ENCODE measurements at regions of chr6 and their contacts with region 1.

Region 1: GRCh38 chr6:32984605-32985389 is 16.4 kb downstream of the BRD2 start:
- DNase-seq: peak; percentile 94
- H3K4me3 Mint-ChIP-seq: no peak overlapping the region
- H3K27ac Mint-ChIP-seq: peak overlapping the region; percentile 32
- H3K4me1 Mint-ChIP-seq: peaks cover 33% of the 10 kb centered on the region
- H3K27me3 Mint-ChIP-seq: no peaks in the 10 kb centered on the region

Region 2: DNA sequence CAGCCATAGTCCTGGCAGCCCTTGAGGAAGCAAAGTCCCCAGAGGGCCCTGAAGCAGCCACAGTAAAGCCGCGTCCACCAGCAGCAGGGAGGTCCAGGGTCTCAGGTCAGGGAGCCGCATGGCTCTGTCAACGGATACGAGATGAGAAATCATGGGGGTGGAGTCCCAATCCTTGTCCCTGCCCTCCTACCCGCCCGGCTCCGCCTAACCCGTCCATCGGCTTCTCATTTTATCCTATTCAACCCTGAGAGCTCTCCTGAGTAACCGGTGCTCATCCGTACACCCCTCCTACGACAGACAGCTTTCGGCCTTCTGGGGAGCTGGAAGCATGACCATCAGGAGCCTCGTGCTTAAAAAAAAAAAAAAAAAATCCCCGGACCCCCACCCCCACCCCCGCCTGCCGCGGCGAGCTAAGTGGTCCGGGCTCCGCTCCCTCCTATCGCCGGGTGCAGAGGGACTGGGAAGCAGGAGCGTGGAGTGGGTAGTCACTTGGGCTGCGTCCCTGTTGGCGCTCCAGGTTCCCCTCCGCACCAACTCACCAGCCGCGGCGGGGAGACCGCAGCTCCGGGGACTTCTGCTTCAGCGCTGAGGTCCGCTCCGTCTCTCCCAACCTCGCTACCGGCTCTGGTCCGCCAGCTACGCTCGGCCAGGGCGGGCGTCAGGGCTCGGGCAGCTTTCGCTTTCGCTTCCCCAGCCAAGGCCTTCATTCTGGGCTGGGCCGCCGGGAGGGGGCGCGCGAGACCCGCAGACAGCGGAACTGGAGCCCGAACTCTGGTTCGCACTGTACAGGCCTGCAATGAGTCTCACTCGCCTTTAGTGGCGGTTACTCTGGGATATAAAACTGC is 146.5 kb before region 1 on chr6 and contains the start of gene TAP2:
- CTCF ChIA-PET with region 1: interaction called, 18 read pairs
- POLR2A ChIA-PET with region 1: no interaction called
- DNase-seq: peak; percentile 97
- H3K4me3 Mint-ChIP-seq: peak within 1 kb of the TSS; percentile 89
- H3K27ac Mint-ChIP-seq: peak within 1 kb of the TSS; percentile 100
- H3K4me1 Mint-ChIP-seq: peaks cover 84% of the 10 kb centered on the region
- H3K27me3 Mint-ChIP-seq: no peaks in the 10 kb centered on the region
- total RNA-seq, gene TAP2: 332 to 337 TPM

Region 3: GRCh38 chr6:32853541-32854375 is 131.0 kb before region 1 on chr6 and contains the starts of genes PSMB9 and TAP1:
- CTCF ChIA-PET with region 1: interaction called, 14 read pairs
- POLR2A ChIA-PET with region 1: no interaction called
- DNase-seq: peak; percentile 97
- H3K4me3 Mint-ChIP-seq: peak within 1 kb of the TSS; percentile 98
- H3K27ac Mint-ChIP-seq: peak within 1 kb of the TSS; percentile 100
- H3K4me1 Mint-ChIP-seq: peaks cover 62% of the 10 kb centered on the region
- H3K27me3 Mint-ChIP-seq: no peaks in the 10 kb centered on the region
- total RNA-seq, gene PSMB9: 329 to 391 TPM
- total RNA-seq, gene TAP1: 396 to 441 TPM

Region 4: DNA sequence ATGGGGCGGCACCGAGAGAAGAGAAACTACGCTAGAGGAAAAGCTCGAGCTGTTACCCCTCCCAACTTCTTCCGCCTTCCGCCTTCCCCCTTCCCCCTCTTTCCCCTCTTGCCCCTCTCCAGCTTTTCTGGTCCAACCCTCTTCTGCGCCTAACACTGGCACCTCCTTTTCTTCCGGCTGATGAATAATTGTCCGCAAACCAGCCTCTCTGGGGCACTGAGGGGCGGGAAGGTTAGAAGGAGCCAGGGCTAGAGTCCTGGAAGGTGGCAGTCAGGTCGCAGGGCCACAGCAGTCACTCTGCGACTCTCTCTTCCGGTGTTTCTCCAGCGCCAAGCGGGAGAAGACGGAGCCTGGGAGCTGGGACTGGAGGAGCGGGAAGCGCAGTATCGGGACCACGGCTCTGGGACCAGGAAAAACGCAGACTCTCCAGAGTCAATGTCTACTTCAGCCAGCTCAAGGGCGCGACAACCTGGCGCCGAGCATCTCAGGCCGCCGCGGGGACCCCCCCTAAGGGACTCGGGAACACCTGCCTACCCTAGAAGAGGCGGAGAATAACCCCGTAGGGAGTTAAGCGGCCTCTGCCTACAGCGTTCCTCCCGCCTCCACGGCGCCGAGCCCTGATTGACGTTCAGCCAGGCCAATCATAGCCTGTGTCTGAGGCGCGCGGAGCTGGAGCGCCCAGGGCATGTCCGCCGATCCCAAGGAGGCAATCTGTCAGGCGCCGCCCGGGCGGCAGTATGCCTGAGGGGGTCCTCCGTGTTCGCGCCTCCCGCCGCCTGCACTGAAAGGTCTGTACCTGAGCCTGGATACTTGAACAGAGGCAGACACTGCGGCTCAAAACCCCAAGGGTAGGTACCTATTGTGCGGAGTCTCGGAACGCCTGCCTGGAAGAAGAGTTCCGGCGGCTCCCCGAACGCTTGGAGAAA is 90.5 kb before region 1 on chr6:
- CTCF ChIA-PET with region 1: interaction called, 11 read pairs
- POLR2A ChIA-PET with region 1: interaction called, 3 read pairs
- DNase-seq: peak; percentile 93
- H3K4me3 Mint-ChIP-seq: peak overlapping the region; percentile 100
- H3K27ac Mint-ChIP-seq: peak overlapping the region; percentile 96
- H3K4me1 Mint-ChIP-seq: peaks cover 38% of the 10 kb centered on the region
- H3K27me3 Mint-ChIP-seq: peaks cover 15% of the 10 kb centered on the region

Region 5: DNA sequence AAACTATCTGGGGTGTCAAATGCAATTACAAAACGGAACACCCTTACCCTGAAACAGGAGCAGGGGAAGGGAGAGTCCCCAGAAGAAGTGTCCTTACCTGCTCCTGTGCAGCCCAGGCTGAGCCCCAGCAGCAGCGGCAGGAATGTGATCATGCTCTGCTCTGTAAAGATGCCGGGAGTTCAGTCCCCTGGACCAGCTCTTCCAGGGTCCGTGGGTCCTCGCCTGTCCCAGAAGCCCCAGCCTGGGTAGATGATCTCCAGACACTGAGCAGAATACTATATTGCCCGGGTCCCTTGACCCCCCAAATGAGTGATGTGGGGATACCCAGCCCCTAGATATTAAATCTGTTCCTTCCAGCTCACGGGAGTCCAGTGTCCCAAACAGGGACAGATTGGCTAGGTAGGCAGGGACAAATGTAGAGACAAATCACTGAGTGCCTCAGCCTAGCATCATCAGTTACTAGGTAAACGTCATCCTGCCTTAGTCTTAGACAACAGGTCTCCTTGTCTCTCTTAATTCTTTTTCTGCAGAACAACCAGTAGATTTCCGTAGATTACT is 44.1 kb before region 1 on chr6 and contains the start of gene HLA-DMB:
- CTCF ChIA-PET with region 1: interaction called, 10 read pairs
- POLR2A ChIA-PET with region 1: no interaction called
- DNase-seq: peak; percentile 72
- H3K4me3 Mint-ChIP-seq: peak within 1 kb of the TSS; percentile 77
- H3K27ac Mint-ChIP-seq: peak within 1 kb of the TSS; percentile 97
- H3K4me1 Mint-ChIP-seq: peaks cover 64% of the 10 kb centered on the region
- H3K27me3 Mint-ChIP-seq: no peaks in the 10 kb centered on the region
- total RNA-seq, gene HLA-DMB: 8.1 to 8.5 TPM

Region 6: GRCh38 chr6:32971581-32972352 is 13.0 kb before region 1 on chr6:
- CTCF ChIA-PET with region 1: interaction called, 130 read pairs
- POLR2A ChIA-PET with region 1: interaction called, 25 read pairs
- DNase-seq: peak; percentile 100
- H3K4me3 Mint-ChIP-seq: peak overlapping the region; percentile 89
- H3K27ac Mint-ChIP-seq: peak overlapping the region; percentile 99
- H3K4me1 Mint-ChIP-seq: peaks cover 25% of the 10 kb centered on the region
- H3K27me3 Mint-ChIP-seq: no peaks in the 10 kb centered on the region